Vagina (tissue), 2 donors: ENCODE measurements at regions of chr17 and their contacts with region 1.

Region 1: DNA sequence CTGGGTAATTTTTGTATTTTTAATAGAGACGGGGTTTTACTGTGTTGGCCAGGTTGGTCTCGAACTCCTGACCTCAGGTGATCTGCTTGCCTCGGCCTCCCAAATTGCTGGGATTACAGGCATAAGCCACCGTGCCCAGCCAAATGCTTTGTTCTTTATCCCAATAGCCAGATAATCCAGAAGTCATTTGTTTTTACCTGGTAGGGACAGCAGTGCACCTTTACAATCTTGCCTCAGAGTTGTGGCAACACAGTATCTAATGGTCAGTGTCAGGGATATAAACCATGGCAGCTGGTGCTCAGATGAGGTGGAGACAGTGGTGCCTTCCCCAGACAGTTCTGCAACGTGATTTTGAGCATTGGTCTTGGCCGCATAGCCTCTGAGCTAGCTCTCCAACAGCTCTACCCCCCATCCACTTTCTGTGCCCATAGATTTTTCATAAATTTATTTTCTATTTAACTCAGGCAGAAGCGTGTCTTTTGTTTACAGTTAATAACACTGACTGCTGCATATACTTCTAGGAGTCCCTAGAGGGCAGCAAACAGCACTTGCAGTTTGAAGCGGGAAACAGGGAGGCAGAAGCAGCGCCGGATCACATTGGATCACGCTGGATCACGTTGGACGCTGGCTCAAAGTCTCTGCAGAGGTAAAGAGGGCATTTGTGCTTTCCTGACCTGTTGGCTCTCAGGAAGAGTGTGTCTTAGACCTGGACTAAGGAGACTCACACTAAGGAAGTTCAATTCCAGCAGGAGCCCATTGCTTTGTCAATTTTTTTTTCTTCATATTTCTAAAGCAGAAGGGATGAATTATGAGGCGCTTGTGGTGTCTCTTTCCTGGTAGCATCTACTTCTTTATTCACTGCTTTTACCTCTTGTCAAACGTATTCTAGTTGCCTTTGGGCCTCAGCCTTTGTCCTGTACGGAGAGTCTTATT is 5.1 kb upstream of the GGT6 start:
- DNase-seq: no peak
- H3K4me3 ChIP-seq: no peak overlapping the region
- H3K27ac ChIP-seq: no peak overlapping the region
- H3K4me1 ChIP-seq: peaks cover 14% of the 10 kb centered on the region
- H3K27me3 ChIP-seq: no peaks in the 10 kb centered on the region
- CTCF ChIP-seq: peak; percentile 38 to 71 (median 62)
- POLR2A ChIP-seq: no peak

Region 2: DNA sequence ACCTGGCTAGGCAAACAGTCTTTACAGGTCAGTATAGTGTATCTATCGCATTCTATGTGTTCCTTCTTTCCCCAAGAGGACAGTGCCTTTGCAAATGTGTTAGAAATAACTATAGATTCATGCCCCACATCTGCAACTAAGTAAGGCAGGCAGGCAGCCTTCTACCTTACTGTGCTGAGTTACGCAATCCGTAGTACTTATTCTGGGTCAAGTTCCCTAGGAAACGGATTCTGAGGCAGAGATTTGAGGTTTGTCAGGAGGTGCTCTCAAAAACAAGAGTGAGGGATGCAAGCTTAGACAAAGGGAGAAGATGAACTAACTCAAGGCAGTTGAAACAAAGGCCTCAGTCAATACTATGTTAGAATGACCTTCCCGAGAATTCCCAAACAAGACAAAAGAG is 289.0 kb before region 1 on chr17:
- intact Hi-C with region 1: no loop called
- DNase-seq: no peak
- H3K4me3 ChIP-seq: no peak overlapping the region
- H3K27ac ChIP-seq: no peak overlapping the region
- H3K4me1 ChIP-seq: no peaks in the 10 kb centered on the region
- H3K27me3 ChIP-seq: no peaks in the 10 kb centered on the region
- CTCF ChIP-seq: no peak
- POLR2A ChIP-seq: no peak

Region 3: DNA sequence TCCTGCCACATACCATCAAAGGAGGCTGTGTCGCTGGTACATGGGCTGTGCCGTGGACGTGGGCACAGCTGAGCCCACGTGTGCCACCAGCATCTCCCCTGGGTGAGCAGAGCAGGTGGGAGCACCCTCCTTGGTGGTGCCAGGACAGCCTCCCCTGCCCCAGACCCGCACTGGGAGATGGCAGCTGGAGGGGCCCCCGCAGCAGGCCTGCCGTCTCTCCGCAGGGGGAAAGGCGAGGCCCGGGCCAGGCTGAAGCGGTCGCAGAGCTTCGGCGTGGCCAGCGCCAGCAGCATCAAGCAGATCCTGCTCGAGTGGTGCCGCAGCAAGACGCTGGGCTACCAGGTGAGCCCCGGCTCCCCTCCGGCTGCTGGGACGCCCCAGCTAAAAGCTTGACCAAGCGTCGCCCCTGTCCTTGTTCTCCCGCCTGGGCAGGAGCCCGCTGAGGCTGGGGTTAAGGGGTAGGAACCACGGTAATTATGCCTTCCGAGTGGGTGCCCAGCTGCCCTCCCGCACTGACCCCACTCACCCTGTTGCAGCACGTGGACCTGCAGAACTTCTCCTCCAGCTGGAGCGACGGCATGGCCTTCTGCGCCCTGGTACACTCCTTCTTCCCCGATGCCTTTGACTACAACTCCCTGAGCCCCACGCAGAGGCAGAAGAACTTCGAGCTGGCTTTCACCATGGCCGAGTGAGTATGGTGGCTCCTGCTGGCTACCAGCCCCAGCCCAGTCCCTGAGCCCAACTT is 31.3 kb after region 1 on chr17:
- intact Hi-C with region 1: no loop called
- DNase-seq: no peak
- H3K4me3 ChIP-seq: no peak overlapping the region
- H3K27ac ChIP-seq: no peak overlapping the region
- H3K4me1 ChIP-seq: peaks cover 26% of the 10 kb centered on the region
- H3K27me3 ChIP-seq: no peaks in the 10 kb centered on the region
- CTCF ChIP-seq: no peak
- POLR2A ChIP-seq: no peak

Region 4: GRCh38 chr17:4607773-4608187 is 42.3 kb after region 1 on chr17:
- intact Hi-C with region 1: no loop called
- DNase-seq: no peak
- H3K4me3 ChIP-seq: no peak overlapping the region
- H3K27ac ChIP-seq: peak overlapping the region; percentile 74
- H3K4me1 ChIP-seq: peaks cover 35% of the 10 kb centered on the region
- H3K27me3 ChIP-seq: no peaks in the 10 kb centered on the region
- CTCF ChIP-seq: no peak
- POLR2A ChIP-seq: no peak

Region 5: GRCh38 chr17:4626734-4627256 is 61.3 kb after region 1 on chr17:
- intact Hi-C with region 1: loop called (anchors 2 kb)
- DNase-seq: no peak
- H3K4me3 ChIP-seq: no peak overlapping the region
- H3K27ac ChIP-seq: no peak overlapping the region
- H3K4me1 ChIP-seq: no peaks in the 10 kb centered on the region
- H3K27me3 ChIP-seq: no peaks in the 10 kb centered on the region
- CTCF ChIP-seq: no peak
- POLR2A ChIP-seq: no peak

Region 6: DNA sequence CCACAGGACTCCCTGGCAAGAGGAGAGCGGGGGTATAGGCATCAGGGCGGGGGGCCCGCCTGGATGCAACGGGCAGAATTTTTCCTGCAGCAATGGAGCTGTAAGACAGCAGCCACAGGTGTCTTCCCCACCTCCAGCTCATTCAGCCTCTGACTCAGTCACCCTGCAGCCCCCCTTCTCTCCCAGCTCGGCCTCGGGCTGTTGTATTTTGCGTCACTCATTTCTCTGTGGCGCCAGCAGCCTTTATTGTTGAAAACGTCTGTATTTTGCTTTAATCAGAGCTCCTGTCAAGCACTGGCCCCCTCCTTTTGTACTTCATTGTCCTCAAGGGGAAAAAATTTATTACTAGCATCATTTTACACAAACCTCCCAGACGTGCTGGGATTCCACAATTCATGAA is 1622.4 kb after region 1 on chr17:
- intact Hi-C with region 1: no loop called
- DNase-seq: no peak
- H3K4me3 ChIP-seq: no peak overlapping the region
- H3K27ac ChIP-seq: no peak overlapping the region
- H3K4me1 ChIP-seq: no peaks in the 10 kb centered on the region
- H3K27me3 ChIP-seq: no peaks in the 10 kb centered on the region
- CTCF ChIP-seq: no peak
- POLR2A ChIP-seq: no peak